PC-3 (cell line): ENCODE measurements at regions of chr2 and their contacts with region 1.

Region 1: DNA sequence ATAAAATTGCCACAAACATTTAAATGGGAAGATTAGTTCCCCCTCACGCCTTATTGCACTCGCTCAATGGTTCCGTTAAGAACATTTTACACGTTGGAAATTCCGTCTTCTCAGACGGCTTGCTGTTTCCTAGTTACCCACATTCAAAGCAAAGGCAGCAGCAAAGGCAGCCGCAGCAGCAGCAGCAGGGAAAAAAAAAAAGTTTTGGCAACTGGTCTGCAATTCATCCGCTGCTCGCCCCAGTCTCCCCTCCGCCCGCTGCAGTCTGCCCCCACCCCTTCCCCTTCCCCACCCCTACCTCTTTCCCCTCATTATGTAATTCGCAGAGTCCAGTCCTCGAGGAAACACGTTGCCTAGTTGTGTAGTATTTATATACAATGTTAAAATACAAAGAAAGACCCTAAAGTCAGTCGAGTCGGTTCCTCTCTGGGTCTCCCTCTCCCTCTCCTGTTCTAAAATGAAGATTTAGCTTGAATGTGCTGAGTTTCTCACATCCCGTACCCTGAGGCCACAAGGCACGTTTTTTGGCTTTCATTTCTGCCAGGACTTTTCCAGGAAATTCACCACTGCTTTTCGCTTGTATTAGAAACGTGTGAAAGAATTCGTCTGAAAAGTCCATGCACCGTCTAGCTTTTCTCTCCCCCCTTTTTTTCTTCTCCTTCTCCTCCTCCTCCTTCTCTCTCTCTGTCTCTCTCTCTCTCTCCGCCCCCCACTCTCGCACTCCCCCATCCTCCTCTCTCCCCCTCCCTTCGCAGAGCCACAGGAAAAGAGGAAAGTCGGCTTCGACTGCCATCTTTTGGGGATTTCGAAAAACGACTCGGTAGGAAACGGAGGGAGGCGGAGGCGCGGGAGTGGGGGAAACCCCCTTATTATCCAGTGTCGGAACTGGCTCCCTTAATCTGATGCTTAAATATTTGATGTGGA is 140.0 kb downstream of the MEIS1 start:
- DNase-seq: peak; percentile 77
- ATAC-seq: peak; percentile 65
- H3K4me3 ChIP-seq: peak overlapping the region; percentile 76
- H3K27ac ChIP-seq: no peak overlapping the region
- H3K4me1 ChIP-seq: peaks cover 17% of the 10 kb centered on the region
- H3K27me3 ChIP-seq: peaks cover 37% of the 10 kb centered on the region
- CTCF ChIP-seq: peak; percentile 84

Region 2: DNA sequence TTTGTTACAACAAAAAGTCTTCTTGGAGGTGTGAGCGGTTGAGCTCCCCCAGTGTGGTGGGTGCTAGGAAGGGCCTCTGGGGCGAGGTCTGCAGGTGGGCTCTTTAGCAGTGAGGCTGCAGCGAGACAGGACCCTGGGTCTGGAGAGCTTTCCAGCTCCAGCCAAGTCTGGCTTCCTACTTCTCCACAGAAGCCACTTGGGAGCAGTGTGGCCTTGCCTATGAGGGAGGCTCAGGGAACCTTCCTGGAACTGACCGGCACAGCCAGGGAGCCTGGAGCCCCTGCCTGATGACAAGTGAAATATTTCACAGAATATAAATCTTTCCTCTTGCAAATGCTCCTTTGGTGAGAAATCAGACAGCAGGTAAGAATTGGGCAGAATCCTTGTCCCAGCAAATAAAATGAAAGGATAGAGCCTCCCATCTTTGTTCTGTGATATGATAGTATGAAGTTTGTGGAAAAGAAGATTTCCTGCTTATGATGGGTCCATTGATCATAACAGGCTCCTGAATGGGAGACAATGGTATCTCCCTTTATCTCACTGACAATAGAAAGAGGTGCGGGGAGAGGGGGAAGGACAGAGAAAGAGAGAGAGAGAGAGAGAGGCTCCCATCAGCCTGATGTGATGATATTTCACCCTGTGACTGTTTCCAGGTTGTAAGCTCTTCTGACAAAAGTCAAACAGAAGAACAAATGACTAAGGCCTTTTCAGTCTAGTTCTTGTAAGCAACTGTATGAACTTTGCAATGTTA is 852.8 kb before region 1 on chr2:
- CTCF ChIA-PET with region 1: no interaction called
- POLR2A ChIA-PET with region 1: no interaction called
- intact Hi-C with region 1: loop called (anchors 10 kb)
- DNase-seq: peak; percentile 55
- ATAC-seq: peak; percentile 83
- H3K4me3 ChIP-seq: no peak overlapping the region
- H3K27ac ChIP-seq: no peak overlapping the region
- H3K4me1 ChIP-seq: peaks cover 20% of the 10 kb centered on the region
- H3K27me3 ChIP-seq: peaks cover 29% of the 10 kb centered on the region
- CTCF ChIP-seq: peak; percentile 60

Region 3: DNA sequence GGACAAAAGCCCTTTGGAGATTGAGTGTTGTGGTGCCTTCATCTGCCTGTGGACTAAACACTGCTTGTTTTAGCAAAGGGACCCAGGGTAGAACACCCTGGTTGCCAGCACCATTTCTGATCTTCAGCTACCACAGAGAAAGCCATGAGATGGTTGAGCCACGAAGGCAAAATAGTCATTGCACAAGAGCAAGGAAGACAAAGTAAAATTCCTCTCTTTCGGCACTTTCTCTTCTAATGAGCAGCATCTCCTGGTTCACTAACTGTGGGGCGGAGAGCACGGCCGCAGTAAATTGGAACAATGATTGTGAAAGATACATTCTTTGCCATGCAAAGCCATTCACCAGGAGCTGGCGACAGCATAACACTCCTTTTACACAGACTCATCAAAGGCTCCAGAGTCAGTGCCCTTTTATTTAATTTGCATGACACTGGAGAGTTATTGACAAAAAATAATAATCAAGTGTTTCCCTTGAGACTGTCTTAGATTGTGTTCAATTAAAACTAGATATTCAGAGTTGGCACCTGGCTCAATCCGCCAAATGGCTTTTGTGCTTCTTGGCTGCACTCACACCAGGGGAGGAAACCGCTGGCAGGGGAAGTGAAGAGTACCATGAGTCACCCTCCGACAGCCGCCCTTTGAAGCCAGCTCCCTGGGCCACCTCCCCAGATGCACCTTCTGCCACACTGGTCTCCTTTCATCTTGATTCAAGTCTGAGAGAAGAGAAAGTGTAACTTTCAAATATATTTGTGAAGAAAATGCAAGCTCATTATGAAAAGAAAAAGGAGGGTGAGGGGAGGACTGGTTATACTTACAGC is 240.5 kb before region 1 on chr2:
- CTCF ChIA-PET with region 1: no interaction called
- POLR2A ChIA-PET with region 1: no interaction called
- intact Hi-C with region 1: no loop called
- DNase-seq: peak; percentile 46
- ATAC-seq: peak; percentile 54; the same call in 1 of the 2 replicates
- H3K4me3 ChIP-seq: no peak overlapping the region
- H3K27ac ChIP-seq: no peak overlapping the region
- H3K4me1 ChIP-seq: no peaks in the 10 kb centered on the region
- H3K27me3 ChIP-seq: peaks cover 68% of the 10 kb centered on the region
- CTCF ChIP-seq: no peak

Region 4: DNA sequence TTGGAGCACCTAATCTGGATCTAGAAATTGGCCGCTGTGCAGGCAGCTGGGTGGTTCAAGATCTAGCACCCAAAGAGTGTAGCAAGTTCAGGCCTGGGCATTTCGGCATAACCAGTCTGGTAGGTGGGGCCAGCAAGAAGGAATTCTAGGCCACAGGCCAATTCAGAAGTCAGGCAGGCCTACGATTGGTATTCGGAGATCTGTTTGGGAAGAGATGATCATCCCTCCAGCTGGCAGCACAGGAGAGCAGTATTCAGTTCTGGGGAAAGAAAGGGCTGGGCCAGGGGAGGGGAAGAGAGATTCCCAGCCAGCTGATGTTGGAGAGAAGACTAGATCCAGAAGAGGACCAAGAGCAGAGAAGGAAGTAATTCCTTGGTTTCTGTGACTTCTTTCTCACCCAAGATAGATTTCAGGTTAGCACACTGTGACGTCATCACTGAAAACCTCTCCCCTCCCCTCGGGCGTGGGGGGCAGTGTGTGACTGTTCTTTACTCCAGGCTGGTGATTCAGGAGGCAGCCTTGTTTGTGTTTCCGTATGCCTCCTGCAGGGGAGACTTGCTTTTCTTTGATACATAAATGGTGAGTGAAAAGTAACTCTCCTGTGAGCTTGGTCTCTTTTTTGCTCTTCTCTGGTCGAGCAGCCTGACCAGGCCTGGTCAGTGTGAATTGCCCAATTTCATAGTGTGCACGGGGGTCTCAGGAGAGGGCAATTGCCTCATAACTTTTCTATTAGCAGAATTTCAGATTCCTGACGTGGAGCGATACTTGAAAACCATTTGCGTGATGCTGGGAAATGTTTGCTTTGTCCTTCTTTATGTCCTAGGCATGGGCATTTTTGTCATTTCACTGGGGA is 78.9 kb before region 1 on chr2:
- CTCF ChIA-PET with region 1: no interaction called
- POLR2A ChIA-PET with region 1: no interaction called
- intact Hi-C with region 1: loop called (anchors 2 kb)
- DNase-seq: peak; percentile 84
- ATAC-seq: peak; percentile 87
- H3K4me3 ChIP-seq: peak overlapping the region; percentile 38
- H3K27ac ChIP-seq: peak overlapping the region; percentile 92
- H3K4me1 ChIP-seq: peaks cover 41% of the 10 kb centered on the region
- H3K27me3 ChIP-seq: no peaks in the 10 kb centered on the region
- CTCF ChIP-seq: peak; percentile 48; the same call in 1 of the 2 replicates

Region 5: DNA sequence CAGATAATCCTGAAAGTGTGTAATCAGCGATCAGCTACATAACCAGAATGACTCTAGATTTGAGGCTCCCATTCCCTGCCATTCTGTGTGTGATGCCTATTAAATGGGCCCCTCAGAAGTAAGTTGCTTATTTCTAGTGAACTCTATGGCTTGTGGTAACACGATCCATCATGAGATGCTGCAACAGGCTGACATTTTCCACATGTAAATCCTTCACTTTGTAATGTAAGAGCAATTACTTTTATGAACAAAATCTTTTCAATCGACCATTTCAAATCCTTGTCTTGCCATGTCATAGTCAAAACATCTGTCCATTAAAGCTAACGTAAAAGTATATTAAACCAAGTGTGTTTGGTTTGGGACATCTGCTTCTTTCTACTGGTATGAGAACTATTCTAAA is 646.3 kb after region 1 on chr2:
- CTCF ChIA-PET with region 1: no interaction called
- POLR2A ChIA-PET with region 1: no interaction called
- intact Hi-C with region 1: loop called (anchors 10 kb)
- DNase-seq: no peak
- ATAC-seq: no peak
- H3K4me3 ChIP-seq: no peak overlapping the region
- H3K27ac ChIP-seq: no peak overlapping the region
- H3K4me1 ChIP-seq: no peaks in the 10 kb centered on the region
- H3K27me3 ChIP-seq: no peaks in the 10 kb centered on the region
- CTCF ChIP-seq: no peak

Region 6: GRCh38 chr2:67650291-67651133 is 1075.5 kb after region 1 on chr2:
- CTCF ChIA-PET with region 1: no interaction called
- POLR2A ChIA-PET with region 1: no interaction called
- intact Hi-C with region 1: loop called (anchors 5 kb)
- DNase-seq: peak; percentile 85
- ATAC-seq: peak; percentile 100
- H3K4me3 ChIP-seq: no peak overlapping the region
- H3K27ac ChIP-seq: 0 out of 2 replicates have a peak overlapping the region, but pooled peaks have one; percentile 19
- H3K4me1 ChIP-seq: peaks cover 6% of the 10 kb centered on the region
- H3K27me3 ChIP-seq: no peaks in the 10 kb centered on the region
- CTCF ChIP-seq: peak; percentile 90